Endothelial cell of umbilical vein (primary cell): ENCODE measurements at regions of chr10 and their contacts with region 1.

Region 1: DNA sequence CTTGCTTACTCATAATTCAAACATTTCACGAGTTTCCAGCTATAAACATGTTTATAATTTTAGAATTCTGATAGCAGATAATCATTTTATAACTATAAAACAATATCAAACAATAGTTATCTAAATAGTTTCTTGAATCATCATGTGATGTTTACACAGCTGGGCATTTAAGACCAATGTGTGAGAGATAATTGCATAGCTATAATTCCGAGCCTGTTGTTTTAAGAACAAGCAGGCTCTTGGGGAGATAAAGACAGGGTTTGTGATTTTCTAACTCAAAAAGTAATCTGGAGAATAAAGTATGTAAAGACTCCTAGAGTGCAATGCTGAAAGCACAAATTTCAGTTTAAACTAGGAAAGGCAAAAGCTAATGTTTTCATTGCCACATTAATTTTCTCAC is 331.2 kb downstream of the LRRTM3 start:
- DNase-seq: peak; percentile 55
- H3K4me3 ChIP-seq: no peak overlapping the region
- H3K27ac ChIP-seq: no peak overlapping the region
- H3K4me1 ChIP-seq: peaks cover 10% of the 10 kb centered on the region
- H3K27me3 ChIP-seq: no peaks in the 10 kb centered on the region
- CTCF ChIP-seq: no peak
- POLR2A ChIP-seq: no peak

Region 2: GRCh38 chr10:66971367-66971766 is 285.7 kb before region 1 on chr10:
- CTCF ChIA-PET with region 1: no interaction called
- POLR2A ChIA-PET with region 1: no interaction called
- dilution Hi-C with region 1: no loop called
- intact Hi-C with region 1: no loop called
- DNase-seq: no peak
- H3K4me3 ChIP-seq: no peak overlapping the region
- H3K27ac ChIP-seq: no peak overlapping the region
- H3K4me1 ChIP-seq: no peaks in the 10 kb centered on the region
- H3K27me3 ChIP-seq: no peaks in the 10 kb centered on the region
- CTCF ChIP-seq: no peak
- POLR2A ChIP-seq: no peak

Region 3: DNA sequence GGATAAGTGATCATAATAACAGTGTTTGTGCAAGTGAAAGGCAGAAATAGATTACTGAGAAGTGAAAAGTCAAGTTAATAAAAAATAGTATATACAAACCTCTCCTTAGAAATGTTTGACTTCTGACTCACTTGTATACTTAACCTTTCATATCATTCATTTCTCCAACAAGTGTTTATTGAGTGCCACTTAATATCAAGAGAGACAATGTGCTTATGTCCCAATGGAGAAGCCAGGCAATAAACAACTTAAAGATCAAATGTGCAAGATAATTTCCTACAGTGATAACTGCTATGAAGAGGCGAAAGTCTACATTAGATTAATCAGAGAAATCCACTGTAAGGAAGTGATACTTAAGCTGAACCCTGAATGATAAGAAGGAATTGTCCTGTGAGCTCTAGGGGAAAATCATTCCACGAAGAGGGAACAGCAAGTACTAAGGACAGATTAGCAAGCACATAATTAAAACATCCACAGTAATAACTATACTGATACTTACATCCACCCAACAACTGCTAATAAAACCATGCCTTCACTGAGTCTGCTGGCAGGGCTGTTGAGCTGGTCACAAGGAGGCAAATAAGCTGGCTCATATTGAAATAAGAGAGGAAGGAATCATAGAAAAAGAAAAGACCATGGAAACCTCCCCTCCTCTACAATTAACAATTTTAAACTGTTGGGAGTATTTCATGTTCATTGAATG is 235.4 kb after region 1 on chr10:
- CTCF ChIA-PET with region 1: no interaction called
- POLR2A ChIA-PET with region 1: no interaction called
- dilution Hi-C with region 1: no loop called
- intact Hi-C with region 1: loop called (anchors 10 kb)
- DNase-seq: peak; percentile 26
- H3K4me3 ChIP-seq: no peak overlapping the region
- H3K27ac ChIP-seq: no peak overlapping the region
- H3K4me1 ChIP-seq: no peaks in the 10 kb centered on the region
- H3K27me3 ChIP-seq: no peaks in the 10 kb centered on the region
- CTCF ChIP-seq: no peak
- POLR2A ChIP-seq: no peak